Heart left ventricle (tissue), 16 donors: ENCODE measurements at regions of chr4 and their contacts with region 1.

Region 1: DNA sequence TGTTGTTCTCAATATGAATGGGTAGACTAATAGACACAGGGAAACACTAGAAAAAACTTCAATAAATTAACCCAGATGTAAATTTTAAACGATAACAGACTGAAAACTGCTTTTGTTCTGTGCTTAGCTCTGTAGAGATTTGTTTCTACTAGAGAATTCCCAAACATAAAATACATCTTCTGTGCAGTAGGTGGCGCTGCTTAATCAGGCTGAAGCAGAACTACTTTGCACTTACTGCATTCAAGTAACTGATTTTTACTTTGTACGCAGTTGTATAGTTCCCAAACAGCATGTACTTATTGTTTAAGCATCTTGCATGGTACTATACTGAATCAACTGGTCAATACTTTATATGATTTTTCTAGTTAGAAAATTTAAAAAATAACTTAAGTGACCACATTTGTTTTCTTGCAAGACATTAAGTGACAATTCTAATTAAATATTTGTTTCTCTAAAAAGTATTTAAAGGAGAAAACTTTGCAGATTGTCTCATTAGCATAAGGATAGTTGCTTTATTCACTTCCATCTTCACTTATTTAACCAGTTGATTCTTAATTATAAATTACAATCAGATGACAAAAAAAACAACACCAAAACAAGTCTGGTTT is 490.6 kb downstream of the IL15 start:
- DNase-seq: peak in 4 of 5 donors; percentile 25 to 57 (median 42)
- ATAC-seq: peak in 3 of 4 donors; percentile 37 to 64 (median 62)
- H3K4me3 ChIP-seq: no peak overlapping the region
- H3K27ac ChIP-seq: no peak overlapping the region
- H3K4me1 ChIP-seq: peaks cover 0 to 42% (median 14%) of the 10 kb centered on the region in 12 donors
- H3K27me3 ChIP-seq: no peaks in the 10 kb centered on the region
- CTCF ChIP-seq: peak; percentile 67 to 97 (median 84)
- POLR2A ChIP-seq: no peak

Region 2: GRCh38 chr4:142379277-142380057 is 252.5 kb after region 1 on chr4:
- intact Hi-C with region 1: loop called in 1 of 10 experiments (anchors 10 kb)
- DNase-seq: no peak
- ATAC-seq: peak in 2 of 4 donors; percentile 37 to 46
- H3K4me3 ChIP-seq: no peak overlapping the region
- H3K27ac ChIP-seq: peak overlapping the region in 11 of 12 donors; percentile 23 to 73 (median 48)
- H3K4me1 ChIP-seq: peaks cover 0 to 61% (median 34%) of the 10 kb centered on the region in 12 donors
- H3K27me3 ChIP-seq: no peaks in the 10 kb centered on the region
- CTCF ChIP-seq: no peak
- POLR2A ChIP-seq: no peak

Region 3: GRCh38 chr4:142840516-142841123 is 713.6 kb after region 1 on chr4:
- intact Hi-C with region 1: loop called in 7 of 10 experiments (anchors 2 to 10 kb)
- DNase-seq: no peak
- ATAC-seq: no peak
- H3K4me3 ChIP-seq: no peak overlapping the region
- H3K27ac ChIP-seq: no peak overlapping the region
- H3K4me1 ChIP-seq: peaks cover 0 to 15% (median 0%) of the 10 kb centered on the region in 12 donors
- H3K27me3 ChIP-seq: peaks cover 0 to 17% (median 0%) of the 10 kb centered on the region in 9 donors
- CTCF ChIP-seq: peak; percentile 46 to 73 (median 66)
- POLR2A ChIP-seq: no peak

Region 4: DNA sequence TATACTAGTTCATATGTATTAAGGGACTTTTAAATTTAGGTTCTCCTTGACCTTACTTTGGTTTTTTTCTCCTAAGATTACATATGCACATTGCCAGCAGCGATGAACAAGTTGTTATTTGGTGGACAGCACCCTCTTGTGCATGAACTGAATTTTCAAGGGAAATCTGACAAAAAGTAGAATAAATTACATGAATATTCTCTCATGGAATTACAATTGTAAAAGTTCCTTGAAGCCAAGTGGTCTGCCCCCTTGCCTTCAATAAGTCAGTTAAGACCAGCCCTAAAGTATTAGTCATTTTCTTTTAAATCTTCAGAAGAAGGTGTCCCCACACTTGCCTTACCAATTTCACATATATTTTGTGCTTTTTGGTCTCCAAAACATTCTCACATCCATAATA is 1355.8 kb after region 1 on chr4:
- intact Hi-C with region 1: loop called in 1 of 10 experiments (anchors 10 kb)
- DNase-seq: peak in 1 of 5 donors; percentile 23
- ATAC-seq: peak in 3 of 4 donors; percentile 20 to 72 (median 57)
- H3K4me3 ChIP-seq: no peak overlapping the region
- H3K27ac ChIP-seq: no peak overlapping the region
- H3K4me1 ChIP-seq: peaks cover 0 to 6% (median 0%) of the 10 kb centered on the region in 12 donors
- H3K27me3 ChIP-seq: no peaks in the 10 kb centered on the region
- CTCF ChIP-seq: peak; percentile 38 to 79 (median 68)
- POLR2A ChIP-seq: no peak